CD14-positive monocyte (primary cell): ENCODE measurements at regions of chr2 and their contacts with region 1.

Region 1: GRCh38 chr2:208254871-208255556 is at the start of gene IDH1:
- DNase-seq: peak; percentile 79
- H3K4me3 ChIP-seq: peak within 1 kb of the TSS; percentile 92 to 100 (median 97)
- H3K4me3 Mint-ChIP-seq: peak within 1 kb of the TSS; percentile 88 to 97
- H3K27ac ChIP-seq: peak within 1 kb of the TSS; percentile 62 to 69
- H3K27ac Mint-ChIP-seq: peak within 1 kb of the TSS; percentile 65 to 96 (median 88)
- H3K4me1 ChIP-seq: peaks cover 45 to 50% of the 10 kb centered on the region in 2 donors
- H3K4me1 Mint-ChIP-seq: peaks cover 49% of the 10 kb centered on the region
- H3K27me3 ChIP-seq: no peaks in the 10 kb centered on the region
- H3K27me3 Mint-ChIP-seq: no peaks in the 10 kb centered on the region
- CTCF ChIP-seq: no peak
- polyA plus RNA-seq, gene IDH1: 33.6 to 120 (median 115) TPM

Region 2: GRCh38 chr2:206765242-206766056 is 1489.6 kb before region 1 on chr2 and contains the starts of genes FASTKD2 and MDH1B:
- intact Hi-C with region 1: loop called in 1 of 2 experiments (anchors 10 kb)
- DNase-seq: peak; percentile 93 to 96 (median 94)
- H3K4me3 ChIP-seq: peak within 1 kb of the TSS; percentile 68 to 88 (median 69)
- H3K4me3 Mint-ChIP-seq: peak within 1 kb of the TSS; percentile 89 to 93
- H3K27ac ChIP-seq: peak within 1 kb of the TSS; percentile 81 to 99
- H3K27ac Mint-ChIP-seq: peak within 1 kb of the TSS in 6 of 7 donors; percentile 97 to 99 (median 98)
- H3K4me1 ChIP-seq: peaks cover 13 to 15% of the 10 kb centered on the region in 2 donors
- H3K4me1 Mint-ChIP-seq: peaks cover 10% of the 10 kb centered on the region
- H3K27me3 ChIP-seq: no peaks in the 10 kb centered on the region
- H3K27me3 Mint-ChIP-seq: peaks cover 0 to 2% (median 0%) of the 10 kb centered on the region in 3 donors
- CTCF ChIP-seq: no peak
- polyA plus RNA-seq, gene FASTKD2: 10.2 to 12.7 (median 11.3) TPM
- polyA plus RNA-seq, gene MDH1B: not detected

Region 3: DNA sequence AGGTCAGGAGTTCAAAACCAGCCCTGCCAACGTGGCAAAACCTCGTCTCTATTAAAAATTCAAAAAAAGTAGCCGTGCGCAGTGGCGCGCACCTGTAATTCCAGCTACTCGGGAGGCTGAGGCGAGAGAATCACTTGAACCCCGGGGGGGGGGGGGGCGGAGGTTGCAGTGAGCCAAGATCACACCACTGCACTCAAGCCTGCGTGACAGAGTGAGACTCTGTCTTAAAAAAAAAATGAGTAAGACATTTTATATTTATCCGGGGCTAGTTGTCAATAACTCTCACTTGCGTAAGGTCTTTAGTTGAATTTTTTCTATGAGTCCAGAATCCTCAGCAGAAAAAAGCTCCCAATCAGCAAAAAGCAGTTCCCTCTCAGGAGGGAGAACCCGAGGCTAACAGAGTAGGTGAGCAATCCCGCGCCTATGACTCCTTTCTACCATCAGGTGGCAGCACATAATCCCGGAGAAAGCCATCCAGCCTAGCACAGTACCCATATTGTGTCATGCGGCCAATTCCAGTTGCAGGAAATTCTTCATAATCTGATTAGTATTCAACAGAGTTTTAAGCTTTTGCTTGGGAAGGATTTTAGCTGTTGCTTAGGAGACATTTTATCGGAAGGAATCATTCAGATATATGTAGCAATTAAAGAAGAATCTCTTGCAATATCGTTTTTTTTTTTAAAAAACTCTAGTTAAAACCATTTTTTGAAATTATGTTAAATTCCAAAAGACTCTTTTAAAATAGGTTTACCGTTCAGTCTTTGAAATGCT is 79.8 kb before region 1 on chr2:
- intact Hi-C with region 1: loop called (anchors 5 to 10 kb)
- DNase-seq: peak; percentile 67 to 80 (median 77)
- H3K4me3 ChIP-seq: no peak overlapping the region
- H3K4me3 Mint-ChIP-seq: no peak overlapping the region
- H3K27ac ChIP-seq: no peak overlapping the region
- H3K27ac Mint-ChIP-seq: no peak overlapping the region
- H3K4me1 ChIP-seq: peaks cover 19 to 23% of the 10 kb centered on the region in 2 donors
- H3K4me1 Mint-ChIP-seq: peaks cover 28% of the 10 kb centered on the region
- H3K27me3 ChIP-seq: no peaks in the 10 kb centered on the region
- H3K27me3 Mint-ChIP-seq: peaks cover 0 to 6% (median 0%) of the 10 kb centered on the region in 3 donors
- CTCF ChIP-seq: peak; percentile 84

Region 4: GRCh38 chr2:208269091-208269490 is 14.1 kb after region 1 on chr2:
- intact Hi-C with region 1: loop called in 1 of 2 experiments (anchors 2 kb)
- DNase-seq: no peak
- H3K4me3 ChIP-seq: no peak overlapping the region
- H3K4me3 Mint-ChIP-seq: no peak overlapping the region
- H3K27ac ChIP-seq: peak overlapping the region in 1 of 2 donors; percentile 58
- H3K27ac Mint-ChIP-seq: peak overlapping the region in 5 of 7 donors; percentile 54 to 79 (median 62)
- H3K4me1 ChIP-seq: peaks cover 39 to 43% of the 10 kb centered on the region in 2 donors
- H3K4me1 Mint-ChIP-seq: peaks cover 39% of the 10 kb centered on the region
- H3K27me3 ChIP-seq: no peaks in the 10 kb centered on the region
- H3K27me3 Mint-ChIP-seq: no peaks in the 10 kb centered on the region
- CTCF ChIP-seq: peak; percentile 17